ENCODE measurements at regions of chr17 and their contacts with region 1.

Region 1: DNA sequence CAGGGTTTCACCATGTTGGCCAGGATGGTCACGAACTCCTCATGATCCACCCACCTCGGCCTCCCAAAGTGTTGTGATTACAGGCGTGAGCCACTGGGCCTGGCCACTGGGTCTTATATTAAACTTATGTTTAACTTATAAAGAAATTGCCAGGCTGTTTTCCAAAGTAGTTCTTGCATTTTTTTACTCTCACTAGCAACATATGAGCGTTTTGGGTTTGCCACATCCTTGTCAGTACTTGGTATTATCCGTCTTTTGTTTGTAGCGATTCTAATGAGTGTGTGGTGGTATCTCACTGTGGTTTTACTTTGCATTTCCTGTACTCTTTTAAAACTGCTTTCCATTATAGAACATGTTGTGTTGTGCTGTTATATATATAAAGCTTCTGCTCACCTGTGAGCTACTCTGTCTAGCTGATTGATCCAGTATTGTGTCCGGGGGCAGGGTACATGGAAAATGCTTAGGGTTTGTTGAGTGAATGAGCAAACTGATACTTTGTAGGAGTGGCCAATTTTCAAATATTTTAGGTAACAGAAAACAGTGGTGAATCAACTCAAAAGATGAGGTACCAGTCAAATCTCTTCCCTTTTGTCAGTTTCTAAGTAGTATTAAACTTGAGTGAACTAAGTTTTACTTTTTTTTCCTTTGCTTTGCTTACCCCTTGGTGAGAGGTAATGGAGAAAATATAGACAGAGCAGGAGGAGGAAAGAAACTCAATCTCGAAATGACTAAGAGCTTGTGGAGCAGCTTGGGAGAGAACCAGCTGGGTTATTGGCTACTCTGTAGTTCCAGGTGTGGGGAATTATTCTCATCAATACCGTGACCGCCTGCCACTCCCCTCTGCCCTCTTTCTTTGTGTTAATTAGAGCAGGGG is 75.8 kb downstream of the PITPNC1 start:
- DNase-seq: peak; percentile 39
- H3K4me3 Mint-ChIP-seq: peak overlapping the region; percentile 48
- H3K27ac Mint-ChIP-seq: peak overlapping the region; percentile 95
- H3K4me1 Mint-ChIP-seq: peaks cover 69% of the 10 kb centered on the region
- H3K27me3 Mint-ChIP-seq: peaks cover 2% of the 10 kb centered on the region

Region 2: DNA sequence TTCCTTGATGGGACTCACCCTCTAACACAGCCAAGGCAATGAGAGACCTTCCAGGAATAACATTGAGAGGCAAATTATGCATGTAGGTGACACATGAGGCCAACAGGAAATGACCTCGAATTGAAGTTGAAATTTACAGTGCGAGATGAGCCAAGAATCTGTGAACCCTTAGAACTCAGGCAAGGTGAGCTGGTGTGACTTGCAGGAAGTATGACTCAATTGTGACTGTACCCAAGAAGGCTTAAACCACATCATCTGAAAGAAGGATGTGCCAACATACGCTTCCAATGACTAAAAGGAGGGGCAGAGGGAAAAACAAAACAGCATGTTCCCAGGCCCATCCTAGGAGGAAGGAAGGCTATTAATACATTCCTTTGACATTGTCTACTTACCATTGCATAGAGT is 31.0 kb before region 1 on chr17:
- intact Hi-C with region 1: loop called (anchors 1 kb)
- DNase-seq: peak; percentile 64
- H3K4me3 Mint-ChIP-seq: peak overlapping the region; percentile 48
- H3K27ac Mint-ChIP-seq: peak overlapping the region; percentile 74
- H3K4me1 Mint-ChIP-seq: peaks cover 52% of the 10 kb centered on the region
- H3K27me3 Mint-ChIP-seq: no peaks in the 10 kb centered on the region

Region 3: DNA sequence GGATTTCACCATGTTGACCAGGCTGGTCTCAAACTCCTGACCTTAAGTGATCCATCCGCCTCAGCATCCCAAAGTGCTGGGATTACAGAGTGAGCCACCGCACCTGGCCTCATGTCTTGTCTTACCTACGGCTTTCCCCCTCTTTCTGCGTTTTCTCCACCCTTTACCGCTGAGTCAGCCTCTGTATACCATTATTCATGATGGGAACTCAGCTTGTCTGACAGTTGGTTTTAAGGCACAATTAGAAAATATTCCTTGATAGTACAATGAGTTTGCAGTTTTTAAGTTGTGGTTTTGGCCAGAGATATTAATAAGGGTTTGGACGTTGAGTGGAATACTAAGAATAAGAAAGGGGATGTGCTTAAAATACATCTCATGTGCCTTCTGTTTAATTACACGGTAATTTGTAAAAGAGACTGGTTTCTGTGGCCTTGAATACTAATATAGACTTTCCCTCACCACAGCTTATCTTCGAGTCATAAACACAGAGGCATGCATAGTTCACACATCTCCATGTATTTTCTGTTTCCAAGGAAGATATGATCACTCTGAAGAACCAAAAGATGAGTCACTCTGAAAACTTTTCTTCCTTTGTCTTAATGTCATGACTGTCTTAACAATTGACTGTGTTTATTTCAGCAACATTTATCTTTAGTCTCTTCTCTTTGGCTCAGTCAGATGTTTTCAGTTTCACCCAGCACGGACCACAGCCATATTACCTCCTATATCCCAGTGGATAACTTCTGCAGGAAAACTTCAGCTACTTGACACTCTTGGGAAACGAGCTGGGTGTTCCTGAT is 21.5 kb before region 1 on chr17:
- intact Hi-C with region 1: loop called (anchors 1 kb)
- DNase-seq: no peak
- H3K4me3 Mint-ChIP-seq: peak overlapping the region; percentile 46
- H3K27ac Mint-ChIP-seq: peak overlapping the region; percentile 85
- H3K4me1 Mint-ChIP-seq: peaks cover 51% of the 10 kb centered on the region
- H3K27me3 Mint-ChIP-seq: no peaks in the 10 kb centered on the region

Region 4: GRCh38 chr17:67441052-67441927 is 11.6 kb before region 1 on chr17:
- intact Hi-C with region 1: loop called (anchors 1 kb)
- DNase-seq: peak; percentile 65
- H3K4me3 Mint-ChIP-seq: peak overlapping the region; percentile 82
- H3K27ac Mint-ChIP-seq: peak overlapping the region; percentile 98
- H3K4me1 Mint-ChIP-seq: peaks cover 51% of the 10 kb centered on the region
- H3K27me3 Mint-ChIP-seq: no peaks in the 10 kb centered on the region

Region 5: GRCh38 chr17:67575325-67575724 is 122.4 kb after region 1 on chr17:
- intact Hi-C with region 1: no loop called
- DNase-seq: no peak
- H3K4me3 Mint-ChIP-seq: no peak overlapping the region
- H3K27ac Mint-ChIP-seq: no peak overlapping the region
- H3K4me1 Mint-ChIP-seq: no peaks in the 10 kb centered on the region
- H3K27me3 Mint-ChIP-seq: no peaks in the 10 kb centered on the region

Measured in activated T-helper 1 cell treated with anti-CD3 and anti-CD28 coated beads, Interleukin-12 subunit alpha, Interleukin-12 subunit beta, Interleukin-2, Interleukin-4 antibody, amounts not matched to agents 30 ng/mL and 10 ng/mL and 1 ng/mL, durations not matched to agents 14 hours and 24 hours and 36 hours (primary cell).